Natural killer cell (primary cell): ENCODE measurements at regions of chrX and their contacts with region 1.

Region 1: DNA sequence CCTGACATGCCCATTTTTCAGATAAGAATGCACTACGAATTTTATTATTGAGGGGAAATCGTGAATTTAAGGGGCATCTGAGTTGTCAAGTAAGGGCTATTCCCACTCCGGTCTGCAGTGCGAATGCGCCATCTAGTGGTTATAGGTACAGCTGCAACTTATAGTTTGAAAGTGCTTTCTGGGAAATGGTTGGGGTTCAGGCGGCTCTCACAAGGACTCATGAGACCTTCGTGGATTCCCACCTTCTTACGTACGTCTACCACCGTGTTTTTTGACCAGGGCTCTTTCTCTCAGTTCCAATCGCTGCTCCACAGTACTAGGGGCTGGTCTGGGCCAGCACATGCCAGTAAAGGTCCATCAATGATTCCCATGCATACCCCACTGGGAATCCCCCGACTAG is 12.3 kb downstream of the MSL3 start:
- DNase-seq: peak in 1 of 2 donors; percentile 84
- ATAC-seq: peak; percentile 79 to 94 (median 85)
- H3K4me3 ChIP-seq: no peak overlapping the region
- H3K4me3 Mint-ChIP-seq: no peak overlapping the region
- H3K27ac ChIP-seq: no peak overlapping the region
- H3K27ac Mint-ChIP-seq: peak overlapping the region in 1 of 2 donors; percentile 21
- H3K4me1 ChIP-seq: no peaks in the 10 kb centered on the region
- H3K4me1 Mint-ChIP-seq: peaks cover 6 to 14% of the 10 kb centered on the region in 2 donors
- H3K27me3 ChIP-seq: no peaks in the 10 kb centered on the region
- H3K27me3 Mint-ChIP-seq: no peaks in the 10 kb centered on the region
- CTCF ChIP-seq: peak; percentile 70

Region 2: GRCh38 chrX:11143931-11144678 is 626.2 kb before region 1 on chrX:
- intact Hi-C with region 1: loop called (anchors 1 kb)
- DNase-seq: peak in 1 of 2 donors; percentile 79
- ATAC-seq: peak; percentile 73 to 83 (median 73)
- H3K4me3 ChIP-seq: no peak overlapping the region
- H3K4me3 Mint-ChIP-seq: no peak overlapping the region
- H3K27ac ChIP-seq: no peak overlapping the region
- H3K27ac Mint-ChIP-seq: no peak overlapping the region
- H3K4me1 ChIP-seq: no peaks in the 10 kb centered on the region
- H3K4me1 Mint-ChIP-seq: peaks cover 0 to 9% of the 10 kb centered on the region in 2 donors
- H3K27me3 ChIP-seq: no peaks in the 10 kb centered on the region
- H3K27me3 Mint-ChIP-seq: peaks cover 0 to 36% of the 10 kb centered on the region in 2 donors
- CTCF ChIP-seq: peak; percentile 50

Region 3: GRCh38 chrX:11381464-11381863 is 388.9 kb before region 1 on chrX:
- intact Hi-C with region 1: loop called (anchors 5 kb)
- DNase-seq: peak in 1 of 2 donors; percentile 4
- ATAC-seq: peak in 1 of 3 donors; percentile 54
- H3K4me3 ChIP-seq: no peak overlapping the region
- H3K4me3 Mint-ChIP-seq: no peak overlapping the region
- H3K27ac ChIP-seq: no peak overlapping the region
- H3K27ac Mint-ChIP-seq: no peak overlapping the region
- H3K4me1 ChIP-seq: no peaks in the 10 kb centered on the region
- H3K4me1 Mint-ChIP-seq: no peaks in the 10 kb centered on the region
- H3K27me3 ChIP-seq: no peaks in the 10 kb centered on the region
- H3K27me3 Mint-ChIP-seq: no peaks in the 10 kb centered on the region
- CTCF ChIP-seq: no peak

Region 4: GRCh38 chrX:11533211-11533651 is 237.1 kb before region 1 on chrX:
- intact Hi-C with region 1: loop called (anchors 1 kb)
- DNase-seq: peak in 1 of 2 donors; percentile 73
- ATAC-seq: peak; percentile 98 to 99 (median 99)
- H3K4me3 ChIP-seq: no peak overlapping the region
- H3K4me3 Mint-ChIP-seq: no peak overlapping the region
- H3K27ac ChIP-seq: no peak overlapping the region
- H3K27ac Mint-ChIP-seq: no peak overlapping the region
- H3K4me1 ChIP-seq: no peaks in the 10 kb centered on the region
- H3K4me1 Mint-ChIP-seq: no peaks in the 10 kb centered on the region
- H3K27me3 ChIP-seq: no peaks in the 10 kb centered on the region
- H3K27me3 Mint-ChIP-seq: no peaks in the 10 kb centered on the region
- CTCF ChIP-seq: peak; percentile 71

Region 5: DNA sequence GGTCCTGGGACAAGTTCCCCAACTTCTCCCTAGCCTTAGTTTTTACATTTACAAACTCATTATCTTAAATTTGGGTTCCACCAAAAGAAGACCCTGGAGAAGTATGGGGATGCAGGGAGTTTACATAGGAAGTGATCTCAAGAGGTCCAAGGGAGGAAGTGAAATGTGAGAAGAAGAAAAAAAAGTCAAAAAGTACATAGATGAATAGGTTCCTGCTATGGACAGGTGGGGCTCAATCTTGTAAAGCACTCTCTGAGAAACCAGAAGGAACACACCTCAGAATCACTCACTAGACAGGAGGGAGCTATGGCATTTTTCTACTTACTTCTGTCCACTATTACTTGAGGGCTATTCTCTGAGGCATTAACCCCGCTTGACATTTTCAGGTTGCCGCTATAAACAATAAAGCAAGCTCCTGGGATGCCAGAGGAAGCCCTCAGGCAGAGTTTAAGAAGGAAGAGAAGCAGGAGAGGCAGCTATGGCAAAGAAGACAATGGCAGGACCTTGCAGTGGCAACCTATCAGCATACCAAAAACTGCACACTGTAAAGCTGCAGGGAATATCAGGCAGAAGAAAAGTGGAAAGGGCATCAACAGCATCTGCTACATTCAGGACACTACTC is 161.1 kb before region 1 on chrX:
- intact Hi-C with region 1: no loop called
- DNase-seq: no peak
- ATAC-seq: no peak
- H3K4me3 ChIP-seq: no peak overlapping the region
- H3K4me3 Mint-ChIP-seq: no peak overlapping the region
- H3K27ac ChIP-seq: no peak overlapping the region
- H3K27ac Mint-ChIP-seq: no peak overlapping the region
- H3K4me1 ChIP-seq: no peaks in the 10 kb centered on the region
- H3K4me1 Mint-ChIP-seq: no peaks in the 10 kb centered on the region
- H3K27me3 ChIP-seq: no peaks in the 10 kb centered on the region
- H3K27me3 Mint-ChIP-seq: peaks cover 0 to 8% of the 10 kb centered on the region in 2 donors
- CTCF ChIP-seq: no peak

Region 6: GRCh38 chrX:11758400-11759171 is 11.7 kb before region 1 on chrX:
- intact Hi-C with region 1: loop called (anchors 1 kb)
- DNase-seq: peak; percentile 80 to 93
- ATAC-seq: peak; percentile 70 to 89 (median 76)
- H3K4me3 ChIP-seq: peak overlapping the region; percentile 96
- H3K4me3 Mint-ChIP-seq: peak overlapping the region; percentile 91
- H3K27ac ChIP-seq: peak overlapping the region; percentile 86
- H3K27ac Mint-ChIP-seq: peak overlapping the region; percentile 91 to 95
- H3K4me1 ChIP-seq: peaks cover 14% of the 10 kb centered on the region
- H3K4me1 Mint-ChIP-seq: peaks cover 15 to 23% of the 10 kb centered on the region in 2 donors
- H3K27me3 ChIP-seq: no peaks in the 10 kb centered on the region
- H3K27me3 Mint-ChIP-seq: peaks cover 3 to 4% of the 10 kb centered on the region in 2 donors
- CTCF ChIP-seq: peak; percentile 72